ENCODE measurements at regions of chr6 and their contacts with region 1.

Region 1: DNA sequence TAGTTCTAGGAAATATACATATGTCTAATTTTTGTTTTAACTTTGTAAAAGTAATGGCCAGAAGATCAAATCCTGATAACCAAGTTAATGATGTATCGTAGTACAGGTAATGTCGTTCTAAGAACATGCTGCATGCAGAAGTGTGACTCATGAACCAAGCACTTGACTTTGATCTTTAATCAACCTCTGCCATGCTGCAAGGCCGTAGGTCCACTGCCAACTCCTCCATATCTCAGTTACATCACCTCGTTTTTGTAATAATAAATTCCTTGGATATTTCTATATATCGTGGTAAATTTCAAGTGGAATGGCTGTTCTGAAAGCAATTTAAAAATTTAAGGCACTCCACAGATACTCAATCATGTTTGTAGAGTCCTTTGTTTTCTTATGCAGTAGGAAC is 771.7 kb downstream of the EPHA7 start:
- DNase-seq: no peak
- ATAC-seq: no peak
- H3K4me3 ChIP-seq: no peak overlapping the region
- H3K27ac ChIP-seq: no peak overlapping the region
- H3K4me1 ChIP-seq: no peaks in the 10 kb centered on the region
- H3K27me3 ChIP-seq: no peaks in the 10 kb centered on the region
- CTCF ChIP-seq: no peak
- EP300 ChIP-seq: no peak
- POLR2A ChIP-seq: no peak
- RAD21 ChIP-seq: no peak

Region 2: DNA sequence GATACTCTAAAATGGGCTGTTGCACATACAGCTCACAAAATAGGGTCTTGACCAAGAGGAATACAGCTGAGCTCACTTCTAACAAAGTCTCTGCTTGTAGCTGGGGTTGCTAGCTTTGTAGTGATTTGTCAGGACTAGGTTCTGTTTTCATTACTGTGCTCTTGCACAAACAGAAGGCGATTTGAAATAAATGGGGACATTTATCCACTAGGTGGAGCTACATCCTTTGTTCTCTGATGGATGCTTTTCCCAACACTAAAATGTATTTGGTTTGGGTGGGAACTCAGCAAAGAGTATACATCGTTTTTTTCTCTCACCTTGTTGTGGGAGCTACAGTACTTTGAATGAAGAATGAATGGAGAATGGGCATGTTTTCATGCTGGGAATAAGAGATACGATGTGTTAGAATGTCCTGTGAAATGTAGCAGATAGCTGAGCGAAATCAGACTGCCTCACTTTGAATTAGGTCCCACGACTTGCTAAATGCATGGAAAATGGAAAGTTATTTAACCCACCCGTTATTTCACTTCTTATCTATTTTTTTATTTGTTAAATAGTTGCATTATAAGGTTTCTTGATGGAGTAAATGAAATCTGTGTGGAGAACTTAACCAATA is 1566.1 kb before region 1 on chr6:
- CTCF ChIA-PET with region 1: no interaction called
- POLR2A ChIA-PET with region 1: no interaction called
- in situ Hi-C with region 1: no loop called
- intact Hi-C with region 1: loop called (anchors 5 kb)
- DNase-seq: peak; percentile 30 to 53 (median 36)
- ATAC-seq: peak; percentile 83
- H3K4me3 ChIP-seq: no peak overlapping the region
- H3K27ac ChIP-seq: no peak overlapping the region
- H3K4me1 ChIP-seq: no peaks in the 10 kb centered on the region
- H3K27me3 ChIP-seq: no peaks in the 10 kb centered on the region
- CTCF ChIP-seq: peak in 2 of 3 experiments; percentile 58 to 67; a peak in 4 of 6 replicates
- EP300 ChIP-seq: no peak
- POLR2A ChIP-seq: no peak
- RAD21 ChIP-seq: peak; percentile 55 to 76

Region 3: GRCh38 chr6:91506551-91506950 is 1141.1 kb before region 1 on chr6:
- CTCF ChIA-PET with region 1: no interaction called
- POLR2A ChIA-PET with region 1: no interaction called
- in situ Hi-C with region 1: no loop called
- intact Hi-C with region 1: no loop called
- DNase-seq: no peak
- ATAC-seq: no peak
- H3K4me3 ChIP-seq: no peak overlapping the region
- H3K27ac ChIP-seq: no peak overlapping the region
- H3K4me1 ChIP-seq: no peaks in the 10 kb centered on the region
- H3K27me3 ChIP-seq: no peaks in the 10 kb centered on the region
- CTCF ChIP-seq: no peak
- EP300 ChIP-seq: no peak
- POLR2A ChIP-seq: no peak
- RAD21 ChIP-seq: no peak

Region 4: DNA sequence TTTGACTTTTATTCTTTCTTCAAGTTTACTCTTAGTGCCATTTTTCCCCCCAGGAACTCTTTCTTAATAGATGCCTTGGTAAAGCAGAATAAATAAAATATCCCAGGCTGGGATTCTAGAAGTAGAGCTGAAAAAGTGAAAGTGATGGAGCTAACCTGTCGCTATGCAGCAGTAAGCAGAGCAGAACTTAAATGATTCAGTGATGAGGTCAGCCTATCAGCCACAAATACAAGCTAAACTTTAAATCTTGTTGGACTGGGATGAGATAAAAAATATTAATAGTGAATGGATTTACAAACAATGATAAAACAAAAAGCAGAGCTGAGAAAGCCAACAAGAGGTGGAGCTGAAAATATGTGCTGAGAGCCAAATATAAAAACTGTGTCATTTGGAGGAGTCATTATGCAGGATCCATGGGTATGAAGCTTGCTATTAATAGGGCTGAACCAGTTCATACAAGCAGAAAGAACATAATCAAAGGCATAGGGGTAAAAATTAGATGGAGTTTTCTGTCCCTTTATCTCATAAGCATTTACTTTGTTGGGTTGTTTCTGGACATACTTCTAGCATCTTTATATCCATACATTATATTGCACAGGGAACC is 106.1 kb before region 1 on chr6:
- CTCF ChIA-PET with region 1: no interaction called
- POLR2A ChIA-PET with region 1: no interaction called
- in situ Hi-C with region 1: no loop called
- intact Hi-C with region 1: no loop called
- DNase-seq: no peak
- ATAC-seq: no peak
- H3K4me3 ChIP-seq: no peak overlapping the region
- H3K27ac ChIP-seq: no peak overlapping the region
- H3K4me1 ChIP-seq: no peaks in the 10 kb centered on the region
- H3K27me3 ChIP-seq: no peaks in the 10 kb centered on the region
- CTCF ChIP-seq: no peak
- EP300 ChIP-seq: no peak
- POLR2A ChIP-seq: no peak
- RAD21 ChIP-seq: no peak